ENCODE measurements at regions of chr14 and their contacts with region 1.

Region 1: GRCh38 chr14:69586404-69586803 is 11.7 kb upstream of the CCDC177 start:
- DNase-seq: no peak
- H3K4me3 ChIP-seq: no peak overlapping the region
- H3K27ac ChIP-seq: no peak overlapping the region
- H3K27me3 ChIP-seq: no peaks in the 10 kb centered on the region
- CTCF ChIP-seq: no peak

Region 2: DNA sequence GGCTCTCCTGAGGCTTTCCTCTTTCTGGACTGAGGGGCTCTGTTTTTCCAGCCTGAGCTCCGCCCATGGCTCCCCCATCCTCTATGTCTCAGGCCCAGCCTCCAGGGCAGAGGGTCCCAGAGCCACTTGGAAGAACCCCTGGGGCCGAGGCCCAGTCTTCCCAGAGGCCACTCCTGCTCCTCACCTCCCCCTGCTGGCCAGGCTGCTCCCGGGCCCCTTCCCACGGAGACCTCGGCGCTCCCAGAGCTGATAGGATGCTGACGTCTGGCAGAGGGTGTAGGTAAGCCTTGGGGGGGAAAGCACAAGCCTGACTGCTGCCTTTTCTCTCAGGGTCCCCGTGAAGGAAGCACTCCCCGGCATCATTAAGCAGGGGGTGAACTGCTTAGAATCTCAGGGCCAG is 239.7 kb before region 1 on chr14:
- CTCF ChIA-PET with region 1: no interaction called
- POLR2A ChIA-PET with region 1: no interaction called
- DNase-seq: no peak
- H3K4me3 ChIP-seq: no peak overlapping the region
- H3K27ac ChIP-seq: no peak overlapping the region
- H3K27me3 ChIP-seq: peaks cover 48% of the 10 kb centered on the region
- CTCF ChIP-seq: peak; percentile 75

Region 3: GRCh38 chr14:69408331-69408960 is 178.0 kb before region 1 on chr14:
- CTCF ChIA-PET with region 1: no interaction called
- POLR2A ChIA-PET with region 1: no interaction called
- DNase-seq: no peak
- H3K4me3 ChIP-seq: no peak overlapping the region
- H3K27ac ChIP-seq: no peak overlapping the region
- H3K27me3 ChIP-seq: no peaks in the 10 kb centered on the region
- CTCF ChIP-seq: no peak

Region 4: DNA sequence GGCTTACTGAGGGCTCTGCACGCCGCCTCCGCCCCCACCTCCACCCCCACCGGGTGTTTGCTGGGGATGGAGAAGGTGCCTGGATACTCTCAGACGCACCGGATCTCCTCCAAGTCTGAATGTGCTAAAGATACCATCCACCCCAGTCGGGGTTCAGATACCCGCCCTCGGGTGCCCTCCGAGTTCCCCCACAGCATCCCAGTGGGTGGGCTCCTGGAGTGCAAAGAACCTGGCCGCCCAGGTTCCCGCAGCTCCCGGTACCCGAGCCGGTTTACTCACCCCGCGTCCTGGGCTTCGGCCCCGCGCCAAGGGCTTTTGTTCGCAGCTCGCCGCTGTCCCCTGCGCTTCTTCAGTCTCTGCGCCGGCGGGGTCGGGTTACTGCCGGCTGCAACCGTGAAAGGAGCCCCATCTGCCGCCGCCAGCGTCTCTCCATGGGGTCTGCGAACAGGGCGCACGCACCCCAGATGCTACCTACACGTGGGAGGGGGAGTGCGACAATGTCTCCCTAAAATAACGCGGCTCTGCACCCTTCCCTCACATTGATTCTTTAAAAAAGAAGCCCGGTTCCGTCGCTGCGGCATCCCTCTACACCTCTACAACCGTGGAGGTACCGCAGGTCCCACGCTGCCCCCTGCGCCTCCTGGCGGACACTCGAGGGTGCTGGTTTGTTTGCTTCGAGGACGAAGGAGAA is 12.0 kb before region 1 on chr14 and contains the start of gene CCDC177:
- CTCF ChIA-PET with region 1: interaction called, 22 read pairs
- POLR2A ChIA-PET with region 1: no interaction called
- DNase-seq: no peak
- H3K4me3 ChIP-seq: peak within 1 kb of the TSS; percentile 46
- H3K27ac ChIP-seq: no peak within 1 kb of the TSS
- H3K27me3 ChIP-seq: peaks cover 67% of the 10 kb centered on the region
- CTCF ChIP-seq: peak; percentile 97
- polyA plus RNA-seq, gene CCDC177: not detected in 2 replicates

Region 5: GRCh38 chr14:69606258-69607184 is 20.1 kb after region 1 on chr14:
- CTCF ChIA-PET with region 1: interaction called, 24 read pairs
- POLR2A ChIA-PET with region 1: interaction called, 3 read pairs
- DNase-seq: no peak
- H3K4me3 ChIP-seq: no peak overlapping the region
- H3K27ac ChIP-seq: no peak overlapping the region
- H3K27me3 ChIP-seq: no peaks in the 10 kb centered on the region
- CTCF ChIP-seq: no peak

Region 6: GRCh38 chr14:69685716-69686115 is 99.3 kb after region 1 on chr14:
- CTCF ChIA-PET with region 1: no interaction called
- POLR2A ChIA-PET with region 1: no interaction called
- DNase-seq: no peak
- H3K4me3 ChIP-seq: no peak overlapping the region
- H3K27ac ChIP-seq: no peak overlapping the region
- H3K27me3 ChIP-seq: no peaks in the 10 kb centered on the region
- CTCF ChIP-seq: no peak

Region 7: DNA sequence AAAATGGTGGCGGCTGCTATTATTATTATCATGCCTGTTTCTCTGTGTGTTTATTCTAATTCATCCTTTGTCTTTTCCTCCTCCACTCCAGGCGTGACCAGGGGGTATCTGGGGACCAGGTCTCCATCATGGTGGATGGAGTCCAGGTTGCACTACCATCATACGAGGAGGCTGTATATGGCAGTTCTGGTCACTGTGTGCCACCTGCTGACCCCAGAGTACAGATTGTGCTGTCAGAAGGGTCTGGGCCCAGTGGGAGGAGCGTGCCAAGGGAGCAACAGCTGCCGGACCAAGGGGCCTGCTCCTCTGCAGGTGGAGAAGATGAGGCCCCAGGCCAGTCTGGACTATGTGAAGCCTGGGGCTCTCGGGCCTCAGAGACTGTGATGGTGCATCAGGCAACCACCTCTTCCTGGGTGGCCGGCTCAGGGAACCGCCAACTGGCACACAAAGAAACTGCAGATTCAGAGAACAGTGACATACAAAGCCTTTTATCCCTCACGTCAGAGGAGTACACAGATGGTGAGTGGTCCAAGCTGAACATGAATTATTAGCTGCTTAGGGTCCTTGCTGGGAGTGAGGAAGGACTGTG is 122.3 kb after region 1 on chr14:
- CTCF ChIA-PET with region 1: interaction called, 18 read pairs
- POLR2A ChIA-PET with region 1: no interaction called
- DNase-seq: no peak
- H3K4me3 ChIP-seq: no peak overlapping the region
- H3K27ac ChIP-seq: no peak overlapping the region
- H3K27me3 ChIP-seq: no peaks in the 10 kb centered on the region
- CTCF ChIP-seq: peak; percentile 45

Region 8: GRCh38 chr14:69719501-69719951 is 133.1 kb after region 1 on chr14:
- CTCF ChIA-PET with region 1: interaction called, 29 read pairs
- POLR2A ChIA-PET with region 1: no interaction called
- DNase-seq: peak; percentile 76
- H3K4me3 ChIP-seq: no peak overlapping the region
- H3K27ac ChIP-seq: peak overlapping the region; percentile 84
- H3K27me3 ChIP-seq: no peaks in the 10 kb centered on the region
- CTCF ChIP-seq: no peak

Region 9: GRCh38 chr14:69726761-69727511 is 140.5 kb after region 1 on chr14:
- CTCF ChIA-PET with region 1: interaction called, 115 read pairs
- POLR2A ChIA-PET with region 1: no interaction called
- DNase-seq: peak; percentile 30
- H3K4me3 ChIP-seq: peak overlapping the region; percentile 50
- H3K27ac ChIP-seq: no peak overlapping the region
- H3K27me3 ChIP-seq: no peaks in the 10 kb centered on the region
- CTCF ChIP-seq: peak; percentile 97